Mammary epithelial cell (primary cell): ENCODE measurements at regions of chr11 and their contacts with region 1.

Region 1: DNA sequence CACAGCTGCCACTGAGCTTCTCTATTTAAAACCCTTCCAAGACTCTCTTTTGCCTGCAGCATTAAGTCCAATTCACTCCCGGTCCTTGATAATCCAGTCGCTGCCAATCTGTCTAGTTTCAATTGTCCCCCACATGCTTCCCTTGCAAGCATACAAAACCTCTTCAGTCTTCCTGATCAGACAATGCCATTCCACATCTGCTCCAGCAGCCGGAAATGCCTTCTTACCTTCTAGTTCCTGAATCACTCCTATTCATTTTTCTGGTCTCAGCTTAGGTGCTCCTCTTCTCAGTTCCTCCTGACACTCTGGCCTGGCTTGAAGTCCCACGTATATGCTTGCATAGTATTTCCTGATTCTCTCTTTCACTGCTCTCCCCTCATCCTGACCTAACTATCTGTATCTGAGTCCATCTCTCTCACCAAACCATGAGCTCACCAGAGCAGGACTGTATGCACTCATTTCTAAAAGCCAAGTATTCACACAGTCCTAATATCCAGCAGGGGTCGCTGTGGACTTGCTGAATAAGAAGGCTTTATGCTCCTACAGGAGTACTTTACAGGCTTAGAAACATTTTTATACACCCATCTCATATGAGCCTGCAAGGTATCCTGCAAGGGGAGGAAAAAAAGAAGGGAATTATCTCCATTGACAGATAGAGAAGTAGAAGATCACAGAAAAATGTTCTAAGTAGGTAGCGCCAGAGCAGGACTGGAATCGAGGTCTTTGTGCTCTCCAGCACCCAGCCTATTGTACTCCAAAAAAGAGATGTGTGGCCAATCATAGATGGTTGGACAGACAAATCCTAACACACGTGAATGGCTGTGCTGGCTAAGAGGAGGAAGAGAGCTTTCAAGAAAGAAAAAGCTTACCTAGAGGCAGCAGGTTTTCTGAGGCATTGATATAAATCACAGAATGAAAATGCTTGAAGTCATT is 19.2 kb downstream of the XRRA1 start:
- DNase-seq: peak; percentile 77
- H3K4me3 ChIP-seq: no peak overlapping the region
- H3K27ac ChIP-seq: no peak overlapping the region
- H3K4me1 ChIP-seq: peaks cover 21% of the 10 kb centered on the region
- H3K27me3 ChIP-seq: no peaks in the 10 kb centered on the region
- CTCF ChIP-seq: peak; percentile 84 to 88

Region 2: DNA sequence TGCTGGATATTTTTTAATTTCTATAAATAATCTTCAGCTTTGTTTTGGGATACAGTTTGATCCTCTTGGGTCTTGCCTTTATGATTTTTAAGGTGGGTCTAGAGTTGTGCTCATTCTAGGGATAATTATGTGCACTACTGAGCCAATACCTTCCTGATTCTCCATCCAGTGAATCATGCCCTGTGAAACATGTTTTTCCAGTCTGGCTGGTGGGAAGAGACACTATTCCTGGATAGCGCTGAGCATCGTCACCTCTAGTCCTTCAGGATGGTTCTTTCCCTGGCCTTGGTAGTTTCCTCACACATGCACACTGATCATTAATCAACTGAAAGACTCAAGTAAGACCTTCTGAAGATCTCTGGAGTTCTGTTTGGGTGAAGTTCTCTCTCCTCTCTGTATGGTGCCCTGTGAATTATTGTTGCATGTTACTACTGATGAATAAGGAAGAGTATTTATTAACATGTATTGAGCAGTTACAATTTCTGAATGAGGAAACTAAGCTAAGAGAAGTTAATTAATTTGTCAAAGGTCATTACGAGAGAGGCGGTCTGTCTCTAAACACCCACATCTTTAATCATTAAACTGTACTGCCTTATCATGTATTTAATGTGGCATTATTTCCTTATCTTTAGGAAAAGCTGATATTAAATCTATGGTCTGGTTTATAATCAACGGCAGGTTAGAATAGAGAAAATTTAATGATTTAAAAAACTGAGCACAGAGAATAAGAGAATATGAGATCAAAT is 397.0 kb before region 1 on chr11:
- CTCF ChIA-PET with region 1: no interaction called
- dilution Hi-C with region 1: no loop called
- in situ Hi-C with region 1: no loop called
- intact Hi-C with region 1: no loop called
- DNase-seq: peak; percentile 88
- H3K4me3 ChIP-seq: no peak overlapping the region
- H3K27ac ChIP-seq: no peak overlapping the region
- H3K4me1 ChIP-seq: peaks cover 12% of the 10 kb centered on the region
- H3K27me3 ChIP-seq: no peaks in the 10 kb centered on the region
- CTCF ChIP-seq: no peak

Region 3: GRCh38 chr11:74948898-74949747 is 19.4 kb after region 1 on chr11 and contains the starts of genes SPCS2 and XRRA1:
- CTCF ChIA-PET with region 1: no interaction called
- dilution Hi-C with region 1: no loop called
- in situ Hi-C with region 1: no loop called
- intact Hi-C with region 1: loop called (anchors 2 kb)
- DNase-seq: peak; percentile 98
- H3K4me3 ChIP-seq: peak within 1 kb of the TSS; percentile 72 to 100 (median 99)
- H3K27ac ChIP-seq: peak within 1 kb of the TSS; percentile 91
- H3K4me1 ChIP-seq: peaks cover 11% of the 10 kb centered on the region
- H3K27me3 ChIP-seq: no peaks in the 10 kb centered on the region
- CTCF ChIP-seq: no peak
- total RNA-seq, gene SPCS2: 14.0 to 122 TPM
- total RNA-seq, gene XRRA1: 17.6 to 28.7 TPM

Region 4: DNA sequence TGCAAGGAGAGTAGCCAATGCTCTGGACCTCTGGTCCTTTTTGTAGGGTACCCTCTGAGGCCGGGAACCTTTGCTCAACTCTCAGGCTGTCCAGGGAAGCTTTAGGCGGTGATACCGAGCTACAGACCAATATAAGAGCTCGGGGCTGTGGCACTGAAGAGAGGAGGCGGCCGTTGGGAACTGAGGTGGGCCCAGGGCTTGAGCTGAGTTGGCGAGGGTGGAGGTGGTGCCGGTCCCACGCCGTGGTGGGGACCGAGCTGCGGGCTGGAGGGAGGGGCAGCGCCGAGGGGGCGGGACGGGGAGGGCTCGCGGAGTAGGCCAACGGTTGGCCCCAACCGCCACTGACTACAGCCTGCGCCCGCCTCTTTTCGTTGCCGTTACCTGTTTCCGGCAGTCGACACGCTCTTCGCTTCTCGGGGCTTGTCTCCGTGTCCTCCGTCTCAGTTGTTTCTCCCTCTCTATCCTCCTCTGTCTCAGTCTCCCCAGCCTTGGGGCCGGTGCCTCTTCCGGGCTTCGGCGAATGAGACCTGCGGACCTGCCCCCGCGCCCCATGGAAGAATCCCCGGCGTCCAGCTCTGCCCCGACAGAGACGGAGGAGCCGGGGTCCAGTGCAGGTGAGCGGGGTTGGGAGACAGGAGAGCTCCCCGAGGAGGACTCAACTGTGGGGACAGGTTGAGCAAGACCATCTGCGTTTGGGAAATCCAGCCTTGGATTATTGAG is 59.0 kb after region 1 on chr11 and contains the start of gene NEU3:
- CTCF ChIA-PET with region 1: no interaction called
- dilution Hi-C with region 1: no loop called
- in situ Hi-C with region 1: no loop called
- intact Hi-C with region 1: loop called (anchors 2 kb)
- DNase-seq: peak; percentile 85
- H3K4me3 ChIP-seq: peak within 1 kb of the TSS; percentile 70 to 96 (median 70)
- H3K27ac ChIP-seq: peak within 1 kb of the TSS; percentile 52
- H3K4me1 ChIP-seq: peaks cover 5% of the 10 kb centered on the region
- H3K27me3 ChIP-seq: no peaks in the 10 kb centered on the region
- CTCF ChIP-seq: no peak
- total RNA-seq, gene NEU3: 17.3 to 21.8 TPM

Region 5: GRCh38 chr11:75031771-75032549 is 102.3 kb after region 1 on chr11:
- CTCF ChIA-PET with region 1: interaction called, 9 read pairs
- dilution Hi-C with region 1: no loop called
- in situ Hi-C with region 1: loop called in 1 of 2 experiments (anchors 10 kb)
- intact Hi-C with region 1: loop called (anchors 1 kb)
- DNase-seq: peak; percentile 51
- H3K4me3 ChIP-seq: no peak overlapping the region
- H3K27ac ChIP-seq: no peak overlapping the region
- H3K4me1 ChIP-seq: peaks cover 5% of the 10 kb centered on the region
- H3K27me3 ChIP-seq: no peaks in the 10 kb centered on the region
- CTCF ChIP-seq: peak; percentile 89 to 92

Region 6: GRCh38 chr11:75142714-75143419 is 213.2 kb after region 1 on chr11:
- CTCF ChIA-PET with region 1: interaction called, 16 read pairs
- dilution Hi-C with region 1: no loop called
- in situ Hi-C with region 1: no loop called
- intact Hi-C with region 1: loop called (anchors 1 kb)
- DNase-seq: peak; percentile 86
- H3K4me3 ChIP-seq: no peak overlapping the region
- H3K27ac ChIP-seq: no peak overlapping the region
- H3K4me1 ChIP-seq: peaks cover 10% of the 10 kb centered on the region
- H3K27me3 ChIP-seq: no peaks in the 10 kb centered on the region
- CTCF ChIP-seq: peak in 1 of 2 donors; percentile 3

Region 7: DNA sequence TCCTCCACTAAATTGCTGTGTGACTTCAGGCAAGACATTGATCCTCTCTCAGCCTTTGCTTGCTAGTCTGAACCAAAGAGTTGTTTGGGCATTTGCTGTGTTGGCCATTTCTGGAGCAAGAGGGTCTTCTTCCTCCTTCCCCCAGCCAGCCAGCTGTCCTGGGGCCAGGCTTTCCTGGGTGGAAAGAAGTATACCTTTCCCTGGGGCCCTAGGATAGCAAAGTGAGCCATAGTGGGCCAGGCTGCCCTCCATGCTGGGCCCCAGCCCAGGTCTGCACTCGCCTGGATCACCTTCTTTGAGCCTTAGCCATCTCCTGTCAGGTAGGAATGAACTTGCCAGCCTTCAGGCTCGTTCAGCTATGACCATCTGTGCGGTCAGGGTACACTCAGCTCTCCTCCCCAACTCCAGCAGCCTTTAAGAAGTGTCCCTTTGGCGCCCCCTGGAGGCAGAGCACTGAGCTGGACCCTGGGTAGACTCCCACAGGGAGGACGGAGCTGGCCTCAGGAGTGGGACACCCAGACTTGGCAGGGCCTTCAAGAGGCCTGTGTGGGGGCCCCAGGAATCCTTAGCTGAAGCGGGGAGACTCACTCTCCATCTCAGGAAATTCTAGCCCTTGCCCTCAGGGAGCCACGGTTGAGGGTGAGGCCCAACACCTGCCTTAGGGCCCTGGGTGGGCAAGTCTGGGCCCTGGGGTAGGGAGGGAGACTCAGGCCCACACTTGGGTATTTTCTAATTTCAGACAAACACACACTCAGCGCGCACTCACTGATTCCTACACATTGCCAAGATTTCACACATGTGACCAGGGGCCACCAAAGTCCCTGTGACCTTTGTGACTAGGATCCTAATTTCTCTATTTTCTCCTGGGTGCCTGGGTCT is 275.2 kb after region 1 on chr11:
- CTCF ChIA-PET with region 1: interaction called, 3 read pairs
- dilution Hi-C with region 1: no loop called
- in situ Hi-C with region 1: no loop called
- intact Hi-C with region 1: loop called (anchors 1 kb)
- DNase-seq: peak; percentile 72
- H3K4me3 ChIP-seq: no peak overlapping the region
- H3K27ac ChIP-seq: no peak overlapping the region
- H3K4me1 ChIP-seq: no peaks in the 10 kb centered on the region
- H3K27me3 ChIP-seq: no peaks in the 10 kb centered on the region
- CTCF ChIP-seq: peak; percentile 85 to 92

Region 8: GRCh38 chr11:75248690-75249268 is 319.1 kb after region 1 on chr11:
- CTCF ChIA-PET with region 1: no interaction called
- dilution Hi-C with region 1: no loop called
- in situ Hi-C with region 1: loop called (anchors 5 to 25 kb)
- intact Hi-C with region 1: loop called (anchors 2 kb)
- DNase-seq: peak; percentile 70
- H3K4me3 ChIP-seq: no peak overlapping the region
- H3K27ac ChIP-seq: no peak overlapping the region
- H3K4me1 ChIP-seq: no peaks in the 10 kb centered on the region
- H3K27me3 ChIP-seq: no peaks in the 10 kb centered on the region
- CTCF ChIP-seq: peak; percentile 100